HEK293T (cell line): ENCODE measurements at regions of chr9 and their contacts with region 1.

Region 1: GRCh38 chr9:133144137-133144903 is 19.4 kb downstream of the GBGT1 start:
- DNase-seq: peak; percentile 89

Region 2: DNA sequence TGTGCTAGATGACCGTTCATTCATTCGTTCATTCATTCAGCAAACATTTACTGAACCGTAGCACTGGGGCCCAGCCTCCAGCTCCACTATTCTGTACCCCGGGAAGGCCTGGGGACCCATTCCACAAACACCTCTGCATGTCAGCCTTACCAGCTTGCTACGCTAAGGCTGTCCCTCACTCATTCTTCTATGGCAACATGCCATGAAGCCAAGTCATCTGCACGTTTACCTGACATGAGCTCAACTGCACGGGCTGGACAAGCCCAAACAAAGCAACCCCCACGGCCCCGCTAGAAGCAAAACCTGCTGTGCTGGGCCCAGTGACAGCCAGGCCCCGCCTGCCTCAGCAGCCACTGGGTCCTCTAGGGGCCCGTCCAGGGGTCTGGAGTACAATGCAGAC is 76.5 kb before region 1 on chr9:
- CTCF ChIA-PET with region 1: no interaction called
- POLR2A ChIA-PET with region 1: no interaction called
- DNase-seq: no peak

Region 3: DNA sequence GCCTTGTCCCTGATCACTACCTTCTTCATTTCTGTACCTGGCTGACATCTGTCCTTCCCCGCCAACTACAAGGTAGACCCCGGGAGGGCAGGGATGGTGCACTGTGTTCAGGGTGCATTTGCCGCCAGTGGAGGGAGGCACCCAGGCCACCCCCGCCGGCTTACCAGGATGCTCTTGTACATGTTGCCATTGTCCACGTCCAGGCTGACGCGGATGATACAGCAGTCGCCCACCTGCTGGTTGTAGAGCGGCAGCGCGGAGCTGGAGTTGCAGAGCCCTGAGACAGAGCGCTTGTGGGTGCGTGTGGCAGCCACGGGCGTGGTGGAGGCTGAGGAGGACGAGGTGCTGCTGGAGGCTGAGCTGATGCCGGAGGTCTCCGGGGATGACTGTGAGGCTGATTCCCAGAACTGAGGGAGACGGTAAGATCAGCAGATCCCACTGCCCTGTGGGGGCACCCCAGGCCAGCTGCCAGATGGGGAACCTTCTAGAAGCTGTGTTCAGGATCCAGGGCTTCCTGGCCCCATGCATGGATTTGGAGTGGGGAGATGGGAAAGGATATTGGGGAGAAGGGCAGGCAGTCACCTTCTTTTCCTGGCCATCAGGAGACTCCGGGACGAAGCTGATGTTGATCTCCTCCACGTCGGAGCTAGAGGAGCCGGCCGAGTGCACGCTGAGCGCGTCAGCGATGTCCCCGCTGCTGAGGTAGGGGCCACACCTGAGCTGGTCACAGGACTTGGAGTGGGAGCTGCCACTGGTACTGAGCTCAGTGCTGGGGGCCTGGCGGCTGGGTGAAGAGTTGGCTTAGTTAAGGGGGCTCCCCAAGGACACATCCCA is 42.7 kb before region 1 on chr9:
- CTCF ChIA-PET with region 1: interaction called, 11 read pairs
- POLR2A ChIA-PET with region 1: interaction called, 3 read pairs
- DNase-seq: no peak

Region 4: GRCh38 chr9:133133681-133134418 is 10.5 kb before region 1 on chr9:
- CTCF ChIA-PET with region 1: interaction called, 16 read pairs
- POLR2A ChIA-PET with region 1: no interaction called
- DNase-seq: no peak